CD4-positive, alpha-beta T cell (primary cell): ENCODE measurements at regions of chr17 and their contacts with region 1.

Region 1: GRCh38 chr17:29777663-29778062 is 152.4 kb downstream of the SSH2 start:
- DNase-seq: no peak
- ATAC-seq: no peak
- H3K4me3 ChIP-seq: no peak overlapping the region
- H3K4me3 Mint-ChIP-seq: no peak overlapping the region
- H3K27ac ChIP-seq: no peak overlapping the region
- H3K27ac Mint-ChIP-seq: no peak overlapping the region
- H3K4me1 ChIP-seq: peaks cover 3% of the 10 kb centered on the region
- H3K4me1 Mint-ChIP-seq: peaks cover 9% of the 10 kb centered on the region
- H3K27me3 ChIP-seq: no peaks in the 10 kb centered on the region
- H3K27me3 Mint-ChIP-seq: no peaks in the 10 kb centered on the region
- CTCF ChIP-seq: no peak

Region 2: DNA sequence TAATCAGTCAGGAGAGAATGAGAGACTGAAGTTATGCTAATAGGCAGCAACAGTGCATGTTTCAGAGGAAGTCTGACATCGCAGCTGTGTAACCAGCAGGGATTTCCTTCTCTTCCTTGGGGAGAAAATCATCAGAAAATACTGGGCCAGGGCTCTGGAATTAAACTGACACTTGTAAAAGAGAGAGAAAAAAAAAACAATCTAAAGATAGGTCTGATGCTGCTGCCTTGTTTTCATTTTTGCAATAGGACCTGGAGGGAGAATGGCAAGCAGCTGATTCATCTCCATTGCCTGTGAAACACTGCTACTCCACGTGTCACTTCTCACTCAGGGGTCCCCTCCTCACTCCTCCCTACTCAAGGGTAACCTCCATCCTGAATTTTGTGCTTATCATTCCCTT is 137.2 kb before region 1 on chr17:
- CTCF ChIA-PET with region 1: interaction called, 31 read pairs
- POLR2A ChIA-PET with region 1: interaction called, 15 read pairs
- intact Hi-C with region 1: loop called (anchors 1 kb)
- DNase-seq: no peak
- ATAC-seq: no peak
- H3K4me3 ChIP-seq: no peak overlapping the region
- H3K4me3 Mint-ChIP-seq: no peak overlapping the region
- H3K27ac ChIP-seq: no peak overlapping the region
- H3K27ac Mint-ChIP-seq: peak overlapping the region; percentile 77
- H3K4me1 ChIP-seq: no peaks in the 10 kb centered on the region
- H3K4me1 Mint-ChIP-seq: peaks cover 12% of the 10 kb centered on the region
- H3K27me3 ChIP-seq: no peaks in the 10 kb centered on the region
- H3K27me3 Mint-ChIP-seq: no peaks in the 10 kb centered on the region
- CTCF ChIP-seq: no peak

Region 3: GRCh38 chr17:29653995-29654714 is 123.5 kb before region 1 on chr17:
- CTCF ChIA-PET with region 1: interaction called, 10 read pairs
- POLR2A ChIA-PET with region 1: no interaction called
- intact Hi-C with region 1: no loop called
- DNase-seq: no peak
- ATAC-seq: no peak
- H3K4me3 ChIP-seq: no peak overlapping the region
- H3K4me3 Mint-ChIP-seq: no peak overlapping the region
- H3K27ac ChIP-seq: no peak overlapping the region
- H3K27ac Mint-ChIP-seq: no peak overlapping the region
- H3K4me1 ChIP-seq: no peaks in the 10 kb centered on the region
- H3K4me1 Mint-ChIP-seq: peaks cover 10% of the 10 kb centered on the region
- H3K27me3 ChIP-seq: no peaks in the 10 kb centered on the region
- H3K27me3 Mint-ChIP-seq: no peaks in the 10 kb centered on the region
- CTCF ChIP-seq: no peak

Region 4: GRCh38 chr17:29682054-29682453 is 95.6 kb before region 1 on chr17:
- CTCF ChIA-PET with region 1: interaction called, 10 read pairs
- POLR2A ChIA-PET with region 1: interaction called, 3 read pairs
- intact Hi-C with region 1: loop called in 1 of 2 experiments (anchors 1 kb)
- DNase-seq: peak in 3 of 14 experiments; percentile 36 to 44 (median 42)
- ATAC-seq: peak; percentile 56
- H3K4me3 ChIP-seq: no peak overlapping the region
- H3K4me3 Mint-ChIP-seq: no peak overlapping the region
- H3K27ac ChIP-seq: peak overlapping the region in 1 of 2 donors; percentile 27
- H3K27ac Mint-ChIP-seq: peak overlapping the region; percentile 77
- H3K4me1 ChIP-seq: peaks cover 4% of the 10 kb centered on the region
- H3K4me1 Mint-ChIP-seq: peaks cover 24% of the 10 kb centered on the region
- H3K27me3 ChIP-seq: no peaks in the 10 kb centered on the region
- H3K27me3 Mint-ChIP-seq: no peaks in the 10 kb centered on the region
- CTCF ChIP-seq: no peak

Region 5: DNA sequence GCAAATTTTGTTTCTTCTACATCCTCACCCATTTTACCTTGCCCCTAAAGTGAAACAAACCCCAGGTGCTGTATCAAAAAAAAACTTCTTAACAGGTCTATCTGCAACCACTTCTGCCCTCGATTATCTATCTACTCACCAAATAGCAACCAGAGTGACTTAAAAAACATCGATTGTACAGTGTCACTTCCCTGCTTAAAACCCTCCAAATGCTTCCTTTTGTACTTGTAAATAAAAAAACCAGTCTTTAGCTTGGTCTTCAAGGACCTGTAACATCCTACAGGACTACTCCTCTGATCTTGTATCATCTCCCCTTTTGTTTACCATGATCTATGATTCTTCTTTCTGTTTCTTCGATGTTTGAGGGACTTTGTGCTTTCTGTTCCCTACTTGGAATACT is 72.3 kb before region 1 on chr17:
- CTCF ChIA-PET with region 1: interaction called, 8 read pairs
- POLR2A ChIA-PET with region 1: interaction called, 4 read pairs
- intact Hi-C with region 1: loop called in 1 of 2 experiments (anchors 1 kb)
- DNase-seq: peak in 3 of 14 experiments; percentile 43 to 63 (median 50)
- ATAC-seq: no peak
- H3K4me3 ChIP-seq: peak overlapping the region; percentile 46
- H3K4me3 Mint-ChIP-seq: peak overlapping the region; percentile 71
- H3K27ac ChIP-seq: peak overlapping the region; percentile 81 to 91
- H3K27ac Mint-ChIP-seq: peak overlapping the region; percentile 92
- H3K4me1 ChIP-seq: peaks cover 37% of the 10 kb centered on the region
- H3K4me1 Mint-ChIP-seq: peaks cover 61% of the 10 kb centered on the region
- H3K27me3 ChIP-seq: no peaks in the 10 kb centered on the region
- H3K27me3 Mint-ChIP-seq: no peaks in the 10 kb centered on the region
- CTCF ChIP-seq: no peak

Region 6: GRCh38 chr17:29800457-29800856 is 22.8 kb after region 1 on chr17:
- CTCF ChIA-PET with region 1: no interaction called
- POLR2A ChIA-PET with region 1: no interaction called
- intact Hi-C with region 1: no loop called
- DNase-seq: no peak
- ATAC-seq: no peak
- H3K4me3 ChIP-seq: no peak overlapping the region
- H3K4me3 Mint-ChIP-seq: no peak overlapping the region
- H3K27ac ChIP-seq: no peak overlapping the region
- H3K27ac Mint-ChIP-seq: no peak overlapping the region
- H3K4me1 ChIP-seq: no peaks in the 10 kb centered on the region
- H3K4me1 Mint-ChIP-seq: peaks cover 2% of the 10 kb centered on the region
- H3K27me3 ChIP-seq: no peaks in the 10 kb centered on the region
- H3K27me3 Mint-ChIP-seq: no peaks in the 10 kb centered on the region
- CTCF ChIP-seq: no peak

Region 7: DNA sequence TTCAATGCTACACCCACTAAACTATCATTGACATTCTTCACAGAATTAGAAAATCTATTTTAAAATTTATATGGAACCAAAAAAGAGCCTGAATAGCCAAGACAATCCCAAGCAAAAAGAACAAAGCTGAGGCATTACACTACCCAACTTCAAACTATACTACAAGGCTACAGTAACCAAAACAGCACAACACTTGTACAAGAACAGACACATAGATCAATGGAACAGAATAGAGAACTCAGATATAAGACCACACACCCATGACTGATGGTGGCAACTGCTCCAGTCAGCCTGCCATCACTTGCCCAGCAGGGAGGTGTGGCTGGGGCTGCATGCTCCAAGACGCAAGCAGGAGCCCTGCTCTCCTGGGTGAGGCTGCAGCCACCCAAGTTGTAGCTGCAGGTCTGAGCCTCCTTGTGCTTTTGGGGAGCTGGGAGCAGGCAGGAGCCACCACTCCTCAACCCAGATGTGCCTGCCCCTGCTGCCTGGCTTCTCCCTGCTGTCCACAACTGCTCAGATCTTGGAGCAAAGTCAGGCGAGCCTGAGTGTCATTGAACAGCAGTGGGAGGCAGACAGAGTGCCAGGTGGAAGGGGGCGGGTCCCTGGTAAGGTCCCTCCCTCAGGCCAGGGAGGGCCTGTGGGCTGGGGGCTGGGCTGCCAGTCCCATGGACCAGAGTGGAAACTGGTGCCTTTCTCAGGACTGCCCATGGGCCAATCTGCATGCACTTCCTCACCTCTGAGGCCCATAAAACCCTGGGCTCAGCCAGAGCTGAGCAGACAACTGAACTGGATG is 127.6 kb after region 1 on chr17:
- CTCF ChIA-PET with region 1: no interaction called
- POLR2A ChIA-PET with region 1: no interaction called
- intact Hi-C with region 1: no loop called
- DNase-seq: no peak
- ATAC-seq: no peak
- H3K4me3 ChIP-seq: no peak overlapping the region
- H3K4me3 Mint-ChIP-seq: no peak overlapping the region
- H3K27ac ChIP-seq: no peak overlapping the region
- H3K27ac Mint-ChIP-seq: peak overlapping the region; percentile 2
- H3K4me1 ChIP-seq: peaks cover 15% of the 10 kb centered on the region
- H3K4me1 Mint-ChIP-seq: peaks cover 65% of the 10 kb centered on the region
- H3K27me3 ChIP-seq: no peaks in the 10 kb centered on the region
- H3K27me3 Mint-ChIP-seq: no peaks in the 10 kb centered on the region
- CTCF ChIP-seq: no peak